ENCODE measurements at regions of chr19 and their contacts with region 1.

Region 1: DNA sequence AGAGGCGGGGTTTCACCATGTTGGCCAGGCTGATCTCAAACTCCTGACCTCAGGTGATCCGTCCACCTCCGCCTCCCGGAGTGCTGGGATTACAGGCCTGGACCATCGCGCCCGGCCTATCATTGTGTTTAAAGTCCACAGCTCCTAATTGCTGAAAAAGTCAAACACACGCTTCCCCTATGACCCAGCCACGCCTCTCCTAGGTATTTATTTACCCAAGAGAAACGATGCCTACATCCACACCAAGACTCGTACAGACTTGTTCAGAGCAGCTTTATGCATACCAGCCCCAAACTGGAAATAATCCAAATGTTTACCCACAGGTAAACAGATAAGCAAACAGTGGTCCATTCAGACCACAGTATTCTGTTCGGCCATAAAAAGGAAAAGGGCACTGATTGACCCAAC is 15.1 kb downstream of the ZNRF4 start:
- DNase-seq: no peak
- H3K4me3 ChIP-seq: no peak overlapping the region
- H3K27ac ChIP-seq: no peak overlapping the region
- H3K4me1 ChIP-seq: no peaks in the 10 kb centered on the region
- H3K27me3 ChIP-seq: no peaks in the 10 kb centered on the region
- CTCF ChIP-seq: no peak
- EP300 ChIP-seq: no peak
- POLR2A ChIP-seq: no peak
- RAD21 ChIP-seq: no peak

Region 2: GRCh38 chr19:5445071-5446062 is 24.9 kb before region 1 on chr19:
- CTCF ChIA-PET with region 1: no interaction called
- POLR2A ChIA-PET with region 1: no interaction called
- DNase-seq: no peak
- H3K4me3 ChIP-seq: no peak overlapping the region
- H3K27ac ChIP-seq: no peak overlapping the region
- H3K4me1 ChIP-seq: no peaks in the 10 kb centered on the region
- H3K27me3 ChIP-seq: no peaks in the 10 kb centered on the region; a peak in 3 of 7 replicates
- CTCF ChIP-seq: no peak
- EP300 ChIP-seq: no peak
- POLR2A ChIP-seq: no peak
- RAD21 ChIP-seq: no peak

Region 3: DNA sequence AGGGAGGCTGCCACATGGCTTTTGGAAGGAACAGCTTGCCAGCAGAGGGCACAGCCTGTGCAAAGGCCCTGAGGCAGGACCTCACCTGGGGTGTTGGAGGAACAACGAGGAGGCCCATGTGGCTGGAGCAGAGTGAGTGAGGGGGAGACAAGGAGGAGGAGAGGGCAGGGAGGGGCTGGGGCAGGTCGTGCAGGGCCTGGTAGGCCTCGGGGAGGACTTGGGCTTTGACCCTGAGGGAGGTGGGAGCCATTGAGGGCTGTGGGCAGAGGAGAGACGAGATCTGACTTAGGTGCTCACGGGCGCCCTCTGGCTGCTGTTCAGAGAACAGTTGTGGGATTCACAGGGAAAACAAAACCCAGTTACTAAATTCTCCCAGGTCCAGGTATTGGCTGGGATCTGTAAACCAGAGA is 10.2 kb after region 1 on chr19:
- CTCF ChIA-PET with region 1: interaction called, 11 read pairs
- POLR2A ChIA-PET with region 1: interaction called, 3 read pairs
- DNase-seq: peak; percentile 19 to 80
- H3K4me3 ChIP-seq: no peak overlapping the region
- H3K27ac ChIP-seq: no peak overlapping the region
- H3K4me1 ChIP-seq: peaks cover 0 to 7% (median 0%) of the 10 kb centered on the region in 4 experiments; a peak in 2 of 7 replicates
- H3K27me3 ChIP-seq: peaks cover 0 to 4% (median 0%) of the 10 kb centered on the region in 4 experiments; a peak in 3 of 7 replicates
- CTCF ChIP-seq: peak; percentile 59 to 79 (median 76)
- EP300 ChIP-seq: no peak
- POLR2A ChIP-seq: no peak
- RAD21 ChIP-seq: peak; percentile 47 to 52; a peak in 3 of 4 replicates